Activated CD4-positive, alpha-beta memory T cell treated with anti-CD3 and anti-CD28 coated beads for 36 hours (primary cell): ENCODE measurements at regions of chr6 and their contacts with region 1.

Region 1: DNA sequence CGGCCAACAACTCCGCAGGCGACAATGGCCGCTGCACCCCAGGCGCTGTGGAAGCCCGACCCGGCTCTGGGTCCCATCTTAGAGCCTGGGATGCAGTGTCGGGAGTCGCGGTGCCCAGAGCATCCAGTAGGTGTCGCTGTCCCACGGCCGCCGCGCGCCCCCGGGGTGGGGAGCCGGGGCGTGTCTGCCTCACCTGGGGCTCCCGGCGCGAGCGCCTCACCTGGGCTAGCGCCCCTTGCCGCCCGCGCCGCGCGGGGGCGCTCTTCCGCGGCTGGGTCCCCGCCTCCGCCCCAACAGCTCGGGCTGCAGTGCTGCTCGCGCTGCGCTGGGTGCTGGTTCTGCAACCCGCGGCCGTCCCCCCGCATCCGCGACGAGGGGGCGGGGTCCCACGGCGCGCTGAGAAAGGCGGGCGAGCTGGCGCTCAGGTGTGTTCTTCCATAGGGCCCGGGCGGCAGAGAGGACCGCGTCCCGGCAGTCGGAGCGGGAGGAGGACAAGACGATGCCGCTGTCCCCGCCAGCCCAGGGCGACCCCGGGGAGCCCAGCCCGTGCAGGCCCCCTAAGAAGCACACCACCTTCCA is at the start of gene CRYBG1:
- DNase-seq: peak; percentile 83
- H3K4me3 Mint-ChIP-seq: peak within 1 kb of the TSS; percentile 68
- H3K27ac Mint-ChIP-seq: no peak within 1 kb of the TSS
- H3K4me1 Mint-ChIP-seq: peaks cover 9% of the 10 kb centered on the region
- H3K27me3 Mint-ChIP-seq: peaks cover 37% of the 10 kb centered on the region
- total RNA-seq, gene CRYBG1: 38.4 to 39.3 TPM

Region 2: DNA sequence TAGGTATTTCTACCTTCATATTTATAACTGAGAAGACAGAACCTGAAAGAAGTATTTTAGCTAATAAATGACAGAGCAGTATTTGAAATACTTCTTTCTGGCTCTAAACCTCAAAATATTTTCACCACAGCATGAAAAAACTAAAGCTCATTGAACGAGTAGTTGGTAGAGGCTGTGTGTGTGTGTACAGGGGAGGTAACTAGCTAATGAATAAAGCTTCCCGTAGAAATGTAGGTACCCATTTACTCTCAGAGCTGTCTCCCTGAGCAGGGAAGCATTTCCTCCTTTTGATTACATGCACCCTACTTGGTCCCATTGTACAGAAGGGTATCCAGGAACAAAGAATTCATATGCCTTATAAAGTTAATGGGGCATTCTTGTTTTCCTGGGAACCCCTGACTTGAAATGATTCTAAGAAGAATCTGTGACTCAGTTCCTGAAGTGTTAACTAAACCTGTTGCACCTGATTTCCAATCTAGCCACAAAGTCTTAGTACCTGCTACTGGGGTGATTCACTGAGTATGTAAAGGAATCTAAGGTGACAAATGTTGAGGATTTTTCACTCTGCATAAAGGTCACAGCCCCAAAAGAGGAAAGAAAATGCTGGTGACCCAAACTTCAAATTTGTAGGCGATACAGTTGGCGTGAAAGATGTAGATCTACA is 12.5 kb after region 1 on chr6:
- CTCF ChIA-PET with region 1: interaction called, 31 read pairs
- POLR2A ChIA-PET with region 1: no interaction called
- intact Hi-C with region 1: loop called (anchors 1 kb)
- DNase-seq: no peak
- H3K4me3 Mint-ChIP-seq: no peak overlapping the region
- H3K27ac Mint-ChIP-seq: peak overlapping the region; percentile 38
- H3K4me1 Mint-ChIP-seq: peaks cover 11% of the 10 kb centered on the region
- H3K27me3 Mint-ChIP-seq: peaks cover 4% of the 10 kb centered on the region